Activated CD4-positive, alpha-beta memory T cell treated with anti-CD3 and anti-CD28 coated beads, Interleukin-2, amount 10 ng/mL, durations not matched to agents 7 days and 5 days (primary cell): ENCODE measurements at regions of chr17 and their contacts with region 1.

Region 1: GRCh38 chr17:29617125-29617480 is 5.6 kb downstream of the CORO6 start:
- DNase-seq: peak; percentile 96
- H3K4me3 Mint-ChIP-seq: peak overlapping the region; percentile 75
- H3K27ac Mint-ChIP-seq: peak overlapping the region; percentile 96
- H3K4me1 Mint-ChIP-seq: peaks cover 55% of the 10 kb centered on the region
- H3K27me3 Mint-ChIP-seq: peaks cover 23% of the 10 kb centered on the region

Region 2: GRCh38 chr17:29369831-29370735 is 247.0 kb before region 1 on chr17:
- CTCF ChIA-PET with region 1: interaction called, 11 read pairs
- POLR2A ChIA-PET with region 1: interaction called, 6 read pairs
- DNase-seq: peak; percentile 51
- H3K4me3 Mint-ChIP-seq: no peak overlapping the region
- H3K27ac Mint-ChIP-seq: no peak overlapping the region
- H3K4me1 Mint-ChIP-seq: no peaks in the 10 kb centered on the region
- H3K27me3 Mint-ChIP-seq: no peaks in the 10 kb centered on the region

Region 3: DNA sequence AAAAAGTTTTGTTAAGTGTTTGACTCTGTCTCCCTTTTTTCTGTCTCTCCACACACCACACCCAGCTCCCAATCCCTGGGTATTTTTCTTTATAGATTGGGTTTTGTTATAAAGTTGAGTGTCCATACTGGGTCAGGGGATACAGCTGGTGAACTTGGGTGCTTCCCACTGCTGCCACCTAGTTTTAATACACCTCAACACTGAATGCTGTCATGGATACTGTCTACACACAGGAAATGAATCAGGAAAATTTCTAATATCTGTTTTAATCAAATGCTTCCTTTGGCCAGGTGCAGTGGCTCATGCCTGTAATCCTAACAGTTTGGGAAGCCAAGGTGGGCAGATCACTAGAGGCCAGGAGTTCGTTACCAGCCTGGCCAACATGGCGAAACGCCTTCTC is 232.2 kb before region 1 on chr17:
- CTCF ChIA-PET with region 1: no interaction called
- POLR2A ChIA-PET with region 1: no interaction called
- DNase-seq: no peak
- H3K4me3 Mint-ChIP-seq: no peak overlapping the region
- H3K27ac Mint-ChIP-seq: no peak overlapping the region
- H3K4me1 Mint-ChIP-seq: peaks cover 9% of the 10 kb centered on the region
- H3K27me3 Mint-ChIP-seq: no peaks in the 10 kb centered on the region

Region 4: GRCh38 chr17:29546085-29546484 is 71.0 kb before region 1 on chr17:
- CTCF ChIA-PET with region 1: no interaction called
- POLR2A ChIA-PET with region 1: no interaction called
- DNase-seq: no peak
- H3K4me3 Mint-ChIP-seq: no peak overlapping the region
- H3K27ac Mint-ChIP-seq: no peak overlapping the region
- H3K4me1 Mint-ChIP-seq: peaks cover 24% of the 10 kb centered on the region
- H3K27me3 Mint-ChIP-seq: no peaks in the 10 kb centered on the region

Region 5: DNA sequence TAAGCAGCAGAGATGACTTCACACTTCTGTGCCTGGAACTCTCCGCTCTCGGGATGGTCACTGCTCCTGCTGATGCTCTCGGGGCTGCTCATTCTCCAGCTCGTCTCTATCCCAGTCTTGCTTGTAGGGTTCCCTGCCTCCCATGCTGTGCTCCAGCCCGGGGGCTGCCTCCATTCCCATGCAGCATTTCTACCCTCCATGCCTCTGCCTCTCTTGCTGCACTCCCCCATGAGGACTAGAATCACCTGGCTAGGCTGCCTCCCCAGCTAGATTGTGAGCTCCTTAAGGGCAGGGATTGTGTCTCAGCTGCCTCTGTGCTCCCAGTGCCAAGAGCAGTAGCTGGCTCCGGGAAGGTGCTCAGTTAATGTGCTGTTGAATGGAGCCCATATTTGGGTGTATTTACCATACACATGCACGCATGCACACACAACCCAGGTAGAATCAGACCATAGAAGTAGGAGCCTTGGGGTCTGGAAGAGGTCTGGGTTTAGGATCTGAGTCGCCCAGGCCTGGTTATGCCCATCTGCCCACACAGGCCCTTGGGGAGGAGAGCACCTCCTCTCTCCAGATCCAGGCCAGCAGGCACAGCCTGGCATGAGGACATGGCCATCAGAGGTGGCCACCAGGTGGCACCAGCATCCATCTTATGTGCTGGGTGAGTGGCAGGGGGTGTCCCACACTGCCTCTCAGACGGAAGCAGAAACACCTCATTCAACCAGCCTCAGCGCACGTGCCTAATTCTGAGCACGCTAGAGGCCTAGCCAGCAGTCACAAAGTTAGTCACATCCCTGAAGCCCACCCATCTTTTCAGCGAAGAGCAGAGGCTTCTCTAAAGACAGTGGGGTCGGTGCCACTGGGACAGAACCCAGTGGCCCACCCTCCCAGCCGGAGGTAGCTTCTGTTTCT is 37.0 kb before region 1 on chr17:
- CTCF ChIA-PET with region 1: interaction called, 43 read pairs
- POLR2A ChIA-PET with region 1: interaction called, 61 read pairs
- DNase-seq: peak; percentile 90
- H3K4me3 Mint-ChIP-seq: no peak overlapping the region
- H3K27ac Mint-ChIP-seq: peak overlapping the region; percentile 85
- H3K4me1 Mint-ChIP-seq: peaks cover 25% of the 10 kb centered on the region
- H3K27me3 Mint-ChIP-seq: no peaks in the 10 kb centered on the region

Region 6: DNA sequence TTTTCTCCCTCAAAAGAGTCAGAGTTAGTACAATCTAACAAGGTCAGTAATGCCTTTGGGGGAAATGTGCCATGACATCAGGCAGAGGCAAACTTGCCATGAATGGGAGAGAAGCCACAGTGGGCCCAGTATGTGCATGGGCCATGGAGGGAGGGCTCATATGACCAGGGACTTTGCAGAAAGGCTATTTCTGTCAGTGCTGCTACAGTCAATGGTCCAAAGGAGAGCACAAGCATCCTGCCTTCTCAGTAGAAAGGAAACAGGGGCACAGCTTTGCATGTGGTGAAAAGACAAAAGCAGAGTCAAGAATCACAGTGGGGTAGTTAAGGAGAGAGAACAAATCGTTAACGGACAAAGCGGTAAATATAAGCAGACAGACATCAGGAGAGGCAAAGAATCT is 16.8 kb after region 1 on chr17:
- CTCF ChIA-PET with region 1: interaction called, 36 read pairs
- POLR2A ChIA-PET with region 1: interaction called, 24 read pairs
- DNase-seq: no peak
- H3K4me3 Mint-ChIP-seq: no peak overlapping the region
- H3K27ac Mint-ChIP-seq: peak overlapping the region; percentile 5
- H3K4me1 Mint-ChIP-seq: peaks cover 17% of the 10 kb centered on the region
- H3K27me3 Mint-ChIP-seq: no peaks in the 10 kb centered on the region

Region 7: GRCh38 chr17:29705386-29705785 is 88.3 kb after region 1 on chr17:
- CTCF ChIA-PET with region 1: interaction called, 46 read pairs
- POLR2A ChIA-PET with region 1: interaction called, 31 read pairs
- DNase-seq: no peak
- H3K4me3 Mint-ChIP-seq: peak overlapping the region; percentile 35
- H3K27ac Mint-ChIP-seq: peak overlapping the region; percentile 100
- H3K4me1 Mint-ChIP-seq: peaks cover 45% of the 10 kb centered on the region
- H3K27me3 Mint-ChIP-seq: no peaks in the 10 kb centered on the region

Region 8: GRCh38 chr17:29777663-29778062 is 160.6 kb after region 1 on chr17:
- CTCF ChIA-PET with region 1: interaction called, 48 read pairs
- POLR2A ChIA-PET with region 1: interaction called, 8 read pairs
- DNase-seq: no peak
- H3K4me3 Mint-ChIP-seq: no peak overlapping the region
- H3K27ac Mint-ChIP-seq: no peak overlapping the region
- H3K4me1 Mint-ChIP-seq: peaks cover 9% of the 10 kb centered on the region
- H3K27me3 Mint-ChIP-seq: no peaks in the 10 kb centered on the region